A549 (cell line): ENCODE measurements at regions of chr1 and their contacts with region 1.

Region 1: GRCh38 chr1:156319664-156320063 is 18.4 kb downstream of the CCT3 start:
- DNase-seq: peak; percentile 33 to 35
- ATAC-seq: peak; percentile 34 to 53; a peak in 4 of 6 replicates
- H3K4me3 ChIP-seq: no peak overlapping the region
- H3K27ac ChIP-seq: no peak overlapping the region
- H3K4me1 ChIP-seq: no peaks in the 10 kb centered on the region
- CTCF ChIP-seq: peak; percentile 60
- EP300 ChIP-seq: no peak
- POLR2A ChIP-seq: no peak
- RAD21 ChIP-seq: peak; percentile 40 to 52; a peak in 3 of 5 replicates

Region 2: DNA sequence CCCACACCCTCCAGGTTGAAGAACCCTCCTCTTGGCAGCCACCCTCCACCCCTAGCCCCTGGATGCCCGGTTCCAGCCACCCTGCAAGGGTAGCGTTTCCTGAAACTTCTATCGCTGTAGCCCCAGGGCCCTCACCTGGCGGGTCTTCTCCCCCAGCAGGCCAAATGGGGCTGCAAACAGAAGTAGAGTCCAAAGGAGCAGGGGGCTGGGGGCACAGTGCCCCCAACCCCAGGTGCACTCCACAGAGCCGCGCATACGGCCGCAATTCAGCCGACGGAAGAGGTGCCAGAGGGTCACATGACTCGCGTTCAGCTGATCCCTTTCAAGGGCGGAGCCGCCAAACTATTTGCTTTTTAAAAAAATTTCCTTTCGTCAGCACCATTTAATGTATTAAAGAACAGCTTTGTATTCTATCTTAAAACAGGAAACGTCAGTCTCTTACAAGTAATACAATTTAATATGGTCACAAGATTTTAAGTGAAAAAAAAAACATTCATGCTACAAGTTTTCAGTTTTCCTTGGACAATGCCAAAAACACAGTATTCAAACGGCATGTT is 24.2 kb before region 1 on chr1 and contains the start of gene GLMP:
- CTCF ChIA-PET with region 1: interaction called, 10 read pairs
- POLR2A ChIA-PET with region 1: interaction called, 3 read pairs
- DNase-seq: peak; percentile 64 to 66
- ATAC-seq: peak; percentile 62 to 68
- H3K4me3 ChIP-seq: peak within 1 kb of the TSS; percentile 71
- H3K27ac ChIP-seq: peak within 1 kb of the TSS; percentile 80 to 89
- H3K4me1 ChIP-seq: peaks cover 4% of the 10 kb centered on the region; the same call in 2 of the 3 replicates
- CTCF ChIP-seq: no peak
- EP300 ChIP-seq: no peak
- POLR2A ChIP-seq: peak; percentile 62
- RAD21 ChIP-seq: no peak
- polyA plus RNA-seq, gene GLMP: 12.4 and 16.9 TPM in 2 replicates

Region 3: GRCh38 chr1:156338180-156338973 is 18.7 kb after region 1 on chr1 and contains the starts of genes CCT3 and TSACC:
- CTCF ChIA-PET with region 1: interaction called, 13 read pairs
- POLR2A ChIA-PET with region 1: interaction called, 4 read pairs
- DNase-seq: peak; percentile 99 to 100
- ATAC-seq: peak; percentile 94 to 95
- H3K4me3 ChIP-seq: peak within 1 kb of the TSS; percentile 75
- H3K27ac ChIP-seq: peak within 1 kb of the TSS; percentile 89 to 95
- H3K4me1 ChIP-seq: peaks cover 16% of the 10 kb centered on the region; the same call in 2 of the 3 replicates
- CTCF ChIP-seq: no peak
- EP300 ChIP-seq: no peak
- POLR2A ChIP-seq: peak; percentile 87
- RAD21 ChIP-seq: no peak
- polyA plus RNA-seq, gene CCT3: 528 and 530 TPM in 2 replicates
- polyA plus RNA-seq, gene TSACC: 3.9 and 4.7 TPM in 2 replicates